Activated B cell treated with CpG ODN at 0.5 μM for 24 hours (primary cell): ENCODE measurements at regions of chr1 and their contacts with region 1.

Region 1: DNA sequence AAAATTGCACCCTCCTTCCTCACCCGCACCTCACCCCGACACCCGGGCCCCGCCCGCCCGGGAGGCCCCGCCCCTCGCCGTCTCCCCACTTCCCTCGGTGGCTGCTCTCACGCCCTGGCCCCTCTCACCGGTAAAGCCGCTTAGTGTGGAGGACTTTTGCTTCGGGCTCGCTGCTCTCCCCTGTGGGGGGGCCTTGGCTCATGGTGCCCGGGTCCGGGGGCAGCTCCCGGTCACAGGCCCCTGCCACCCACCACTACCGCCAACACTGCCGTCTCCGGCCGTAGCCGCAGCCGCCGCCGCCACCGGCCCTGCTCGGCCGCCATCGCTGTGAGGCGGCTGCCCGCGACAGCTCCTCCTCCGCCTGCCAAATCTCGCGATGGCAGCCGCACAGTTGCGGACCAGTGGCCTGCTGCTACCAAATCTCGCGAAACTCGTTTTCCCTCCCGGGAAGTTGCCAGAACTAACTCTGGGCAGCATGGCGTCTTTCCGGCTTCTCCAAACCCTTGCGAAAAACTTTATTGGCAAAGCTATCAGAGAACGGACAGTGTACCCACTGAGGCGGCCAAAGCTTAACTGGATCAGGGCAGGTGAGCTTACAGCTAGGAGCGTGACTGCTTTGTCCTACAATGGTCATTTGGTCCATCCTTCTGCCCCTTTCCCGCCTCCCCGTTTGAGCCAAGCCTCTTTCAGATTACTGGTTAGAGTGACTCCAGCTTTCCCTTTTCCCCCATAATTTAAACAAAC is at the start of gene SMG5:
- DNase-seq: peak; percentile 89
- ATAC-seq: peak; percentile 91
- H3K4me3 Mint-ChIP-seq: peak within 1 kb of the TSS; percentile 93
- H3K27ac Mint-ChIP-seq: peak within 1 kb of the TSS; percentile 88
- H3K4me1 Mint-ChIP-seq: peaks cover 40% of the 10 kb centered on the region
- H3K27me3 Mint-ChIP-seq: no peaks in the 10 kb centered on the region
- CTCF ChIP-seq: no peak
- total RNA-seq, gene SMG5: 62.6 and 77.1 TPM in 2 replicates

Region 2: GRCh38 chr1:156154317-156154749 is 128.3 kb before region 1 on chr1:
- CTCF ChIA-PET with region 1: no interaction called
- POLR2A ChIA-PET with region 1: interaction called, 13 read pairs
- intact Hi-C with region 1: no loop called
- DNase-seq: peak; percentile 66
- ATAC-seq: peak; percentile 95
- H3K4me3 Mint-ChIP-seq: peak overlapping the region; percentile 81
- H3K27ac Mint-ChIP-seq: peak overlapping the region; percentile 82
- H3K4me1 Mint-ChIP-seq: peaks cover 95% of the 10 kb centered on the region
- H3K27me3 Mint-ChIP-seq: peaks cover 9% of the 10 kb centered on the region
- CTCF ChIP-seq: no peak

Region 3: DNA sequence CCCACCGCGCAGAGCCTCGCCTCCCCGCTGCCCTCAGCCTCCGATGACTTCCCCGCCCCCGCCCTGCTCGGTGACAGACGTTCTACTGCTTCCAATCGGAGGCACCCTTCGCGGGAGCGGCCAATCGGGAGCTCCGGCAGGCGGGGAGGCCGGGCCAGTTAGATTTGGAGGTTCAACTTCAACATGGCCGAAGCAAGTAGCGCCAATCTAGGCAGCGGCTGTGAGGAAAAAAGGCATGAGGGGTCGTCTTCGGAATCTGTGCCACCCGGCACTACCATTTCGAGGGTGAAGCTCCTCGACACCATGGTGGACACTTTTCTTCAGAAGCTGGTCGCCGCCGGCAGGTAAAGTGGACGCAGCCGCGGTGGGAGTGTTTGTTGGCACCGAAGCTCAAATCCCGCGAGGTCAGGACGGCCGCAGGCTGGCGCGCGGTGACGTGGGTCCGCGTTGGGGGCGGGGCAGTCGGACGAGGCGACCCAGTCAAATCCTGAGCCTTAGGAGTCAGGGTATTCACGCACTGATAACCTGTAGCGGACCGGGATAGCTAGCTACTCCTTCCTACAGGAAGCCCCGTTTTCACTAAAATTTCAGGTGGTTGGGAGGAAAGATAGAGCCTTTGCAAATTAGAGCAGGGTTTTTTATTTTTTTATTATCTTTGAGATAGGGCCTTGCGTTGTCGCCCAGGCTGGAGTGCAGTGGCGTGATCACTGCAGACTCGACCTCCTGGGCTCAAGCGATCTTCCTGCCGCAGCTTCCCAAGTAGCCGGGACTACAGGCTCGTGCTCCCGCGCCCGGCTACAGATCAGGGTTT is 69.6 kb before region 1 on chr1 and contains the start of gene PMF1:
- CTCF ChIA-PET with region 1: no interaction called
- POLR2A ChIA-PET with region 1: interaction called, 16 read pairs
- intact Hi-C with region 1: loop called (anchors 5 kb)
- DNase-seq: peak; percentile 92
- ATAC-seq: peak; percentile 97
- H3K4me3 Mint-ChIP-seq: peak within 1 kb of the TSS; percentile 96
- H3K27ac Mint-ChIP-seq: peak within 1 kb of the TSS; percentile 98
- H3K4me1 Mint-ChIP-seq: peaks cover 28% of the 10 kb centered on the region
- H3K27me3 Mint-ChIP-seq: no peaks in the 10 kb centered on the region
- CTCF ChIP-seq: no peak
- total RNA-seq, gene PMF1: 68.8 and 75.8 TPM in 2 replicates

Region 4: GRCh38 chr1:156295391-156295947 is 12.8 kb after region 1 on chr1 and contains the start of gene GLMP:
- CTCF ChIA-PET with region 1: no interaction called
- POLR2A ChIA-PET with region 1: interaction called, 8 read pairs
- intact Hi-C with region 1: loop called (anchors 1 kb)
- DNase-seq: peak; percentile 28
- ATAC-seq: peak; percentile 56
- H3K4me3 Mint-ChIP-seq: peak within 1 kb of the TSS; percentile 87
- H3K27ac Mint-ChIP-seq: peak within 1 kb of the TSS; percentile 46
- H3K4me1 Mint-ChIP-seq: peaks cover 21% of the 10 kb centered on the region
- H3K27me3 Mint-ChIP-seq: no peaks in the 10 kb centered on the region
- CTCF ChIP-seq: no peak
- total RNA-seq, gene GLMP: 15.9 and 16.8 TPM in 2 replicates

Region 5: GRCh38 chr1:156338180-156338973 is 55.7 kb after region 1 on chr1 and contains the starts of genes CCT3 and TSACC:
- CTCF ChIA-PET with region 1: interaction called, 4 read pairs
- POLR2A ChIA-PET with region 1: interaction called, 5 read pairs
- intact Hi-C with region 1: loop called (anchors 1 kb)
- DNase-seq: peak; percentile 99
- ATAC-seq: peak; percentile 95
- H3K4me3 Mint-ChIP-seq: peak within 1 kb of the TSS; percentile 97
- H3K27ac Mint-ChIP-seq: peak within 1 kb of the TSS; percentile 97
- H3K4me1 Mint-ChIP-seq: peaks cover 40% of the 10 kb centered on the region
- H3K27me3 Mint-ChIP-seq: no peaks in the 10 kb centered on the region
- CTCF ChIP-seq: no peak
- total RNA-seq, gene CCT3: 255 and 260 TPM in 2 replicates
- total RNA-seq, gene TSACC: 0.44 TPM in 1 of 2 replicates, not detected in the other

Region 6: DNA sequence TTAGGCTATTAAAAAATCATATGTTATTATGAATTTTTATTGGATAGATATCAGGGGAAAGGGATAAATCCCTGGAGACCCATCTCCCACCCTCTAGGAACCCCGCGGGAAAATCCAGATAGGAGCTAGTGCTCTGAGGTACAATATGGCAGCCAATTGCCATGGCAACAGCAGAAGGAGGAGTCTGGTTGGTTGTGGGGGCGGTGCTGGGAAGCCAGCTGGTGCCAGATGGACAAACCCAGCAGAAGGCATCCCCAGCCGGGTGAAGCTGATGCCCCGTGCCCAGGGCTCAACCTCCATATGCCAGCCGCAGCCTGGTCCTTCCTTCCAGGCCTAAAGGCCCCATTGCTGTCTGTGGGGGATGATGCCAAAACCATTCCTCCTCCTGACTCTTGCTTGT is 124.7 kb after region 1 on chr1:
- CTCF ChIA-PET with region 1: no interaction called
- POLR2A ChIA-PET with region 1: no interaction called
- intact Hi-C with region 1: no loop called
- DNase-seq: no peak
- ATAC-seq: no peak
- H3K4me3 Mint-ChIP-seq: no peak overlapping the region
- H3K27ac Mint-ChIP-seq: no peak overlapping the region
- H3K4me1 Mint-ChIP-seq: no peaks in the 10 kb centered on the region
- H3K27me3 Mint-ChIP-seq: peaks cover 59% of the 10 kb centered on the region
- CTCF ChIP-seq: no peak